A549 (cell line): ENCODE measurements at regions of chr17 and their contacts with region 1.

Region 1: DNA sequence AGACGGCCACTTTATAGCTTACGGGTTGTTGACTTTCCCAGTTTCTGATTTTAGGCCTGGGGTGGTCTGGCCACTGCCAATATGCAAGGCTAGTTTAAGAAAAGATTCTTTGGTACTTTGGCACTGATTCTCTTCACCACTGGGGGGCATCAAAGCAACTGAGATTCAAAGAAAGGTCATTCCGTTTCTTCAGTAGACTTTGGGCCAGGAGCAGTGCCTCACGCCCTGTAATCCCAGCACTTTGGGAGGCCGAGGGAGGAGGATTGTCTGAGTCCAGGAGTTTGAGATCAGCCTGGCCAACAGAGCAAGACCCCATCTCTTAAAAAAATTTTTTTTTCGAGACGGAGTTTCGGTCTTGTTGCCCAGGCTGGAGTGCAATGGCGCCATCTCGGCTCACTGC is 53.0 kb downstream of the RPA1 start:
- DNase-seq: peak; percentile 59 to 66
- ATAC-seq: peak; percentile 41 to 80; a peak in 3 of 6 replicates
- H3K4me3 ChIP-seq: no peak overlapping the region
- H3K27ac ChIP-seq: no peak overlapping the region
- H3K4me1 ChIP-seq: no peaks in the 10 kb centered on the region
- CTCF ChIP-seq: peak; percentile 58
- EP300 ChIP-seq: no peak
- POLR2A ChIP-seq: no peak
- RAD21 ChIP-seq: peak; percentile 59 to 65

Region 2: GRCh38 chr17:1709971-1710806 is 172.6 kb before region 1 on chr17 and contains the start of gene TLCD2:
- CTCF ChIA-PET with region 1: no interaction called
- POLR2A ChIA-PET with region 1: no interaction called
- DNase-seq: peak; percentile 71 to 92
- ATAC-seq: peak; percentile 51 to 68
- H3K4me3 ChIP-seq: peak within 1 kb of the TSS; percentile 78
- H3K27ac ChIP-seq: peak within 1 kb of the TSS; percentile 87 to 93
- H3K4me1 ChIP-seq: peaks cover 44% of the 10 kb centered on the region
- CTCF ChIP-seq: no peak
- EP300 ChIP-seq: no peak
- POLR2A ChIP-seq: no peak
- RAD21 ChIP-seq: no peak
- polyA plus RNA-seq, gene TLCD2: 3.4 and 4.5 TPM in 2 replicates

Region 3: DNA sequence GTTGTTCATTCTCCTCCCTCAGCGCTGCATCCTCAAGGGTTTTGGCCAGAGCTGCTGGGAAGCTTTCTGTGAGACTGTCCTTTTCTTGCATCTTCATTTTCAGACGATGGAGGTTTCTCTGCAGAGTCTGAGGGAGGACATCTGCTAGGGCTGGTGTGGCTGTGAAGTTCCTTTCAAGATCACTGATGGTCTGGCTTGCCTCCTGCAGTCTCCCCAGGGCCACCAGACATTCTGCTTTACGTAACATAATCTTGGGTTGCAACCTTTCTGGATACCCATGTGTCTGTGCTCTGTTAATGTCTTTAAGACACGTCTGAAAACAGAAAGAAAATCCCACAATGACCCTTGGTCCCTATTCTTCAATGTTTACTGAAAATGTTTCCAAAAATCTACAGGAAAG is 82.1 kb before region 1 on chr17:
- CTCF ChIA-PET with region 1: no interaction called
- POLR2A ChIA-PET with region 1: no interaction called
- DNase-seq: no peak
- ATAC-seq: peak in 1 of 2 experiments; percentile 24; a peak in 1 of 6 replicates
- H3K4me3 ChIP-seq: no peak overlapping the region
- H3K27ac ChIP-seq: no peak overlapping the region
- H3K4me1 ChIP-seq: no peaks in the 10 kb centered on the region
- CTCF ChIP-seq: no peak
- EP300 ChIP-seq: no peak
- POLR2A ChIP-seq: no peak
- RAD21 ChIP-seq: no peak

Region 4: DNA sequence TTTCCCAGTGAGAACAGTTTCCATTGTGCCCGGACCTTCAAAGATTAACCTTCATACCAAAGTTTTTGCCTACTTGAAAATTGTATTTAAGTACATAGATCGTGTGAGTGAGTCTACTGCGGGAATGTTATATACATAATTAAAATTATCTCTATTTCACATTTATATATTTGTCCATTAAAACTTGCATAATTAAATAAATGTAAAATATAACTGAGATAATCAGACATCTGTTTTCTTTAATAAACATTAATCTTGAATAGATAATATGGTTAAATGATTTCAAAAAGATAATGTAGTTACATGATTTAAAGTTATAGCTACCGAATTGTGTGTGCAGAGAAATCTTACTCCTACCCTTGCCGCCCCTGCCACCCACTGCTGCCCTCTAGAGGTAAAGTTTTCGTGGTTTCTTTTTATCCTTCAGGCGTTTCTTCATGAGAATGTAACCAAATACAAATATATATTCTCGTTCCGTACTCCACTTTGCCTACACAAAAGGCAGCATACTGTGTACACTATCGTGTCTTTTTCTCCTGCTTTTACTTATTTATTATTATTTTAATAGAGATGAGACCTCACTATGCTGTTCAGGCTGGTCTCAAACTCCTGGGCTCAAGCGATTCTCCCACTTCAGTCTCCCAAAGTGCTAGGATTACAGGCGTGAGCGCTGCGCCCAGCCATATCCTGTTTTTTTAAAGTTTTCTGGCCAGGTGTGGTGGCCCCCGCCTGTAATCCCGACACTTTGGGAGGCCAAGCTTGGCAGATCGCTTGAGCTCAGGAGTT is 17.4 kb before region 1 on chr17:
- CTCF ChIA-PET with region 1: interaction called, 30 read pairs
- POLR2A ChIA-PET with region 1: no interaction called
- DNase-seq: peak; percentile 51 to 72
- ATAC-seq: peak; percentile 54 to 84; a peak in 5 of 6 replicates
- H3K4me3 ChIP-seq: no peak overlapping the region
- H3K27ac ChIP-seq: no peak overlapping the region
- H3K4me1 ChIP-seq: no peaks in the 10 kb centered on the region
- CTCF ChIP-seq: peak; percentile 91
- EP300 ChIP-seq: no peak
- POLR2A ChIP-seq: no peak
- RAD21 ChIP-seq: peak; percentile 67 to 71

Region 5: GRCh38 chr17:1899403-1900000 is 16.7 kb after region 1 on chr17:
- CTCF ChIA-PET with region 1: interaction called, 53 read pairs
- POLR2A ChIA-PET with region 1: no interaction called
- DNase-seq: peak in 1 of 2 experiments; percentile 33
- ATAC-seq: no peak
- H3K4me3 ChIP-seq: no peak overlapping the region
- H3K27ac ChIP-seq: no peak overlapping the region
- H3K4me1 ChIP-seq: no peaks in the 10 kb centered on the region
- CTCF ChIP-seq: no peak
- EP300 ChIP-seq: no peak
- POLR2A ChIP-seq: no peak
- RAD21 ChIP-seq: no peak